ENCODE measurements at regions of chr1 and their contacts with region 1.

Region 1: GRCh38 chr1:25204797-25205480 is 27.4 kb downstream of the SYF2 start:
- DNase-seq: no peak
- H3K4me3 Mint-ChIP-seq: no peak overlapping the region
- H3K27ac Mint-ChIP-seq: no peak overlapping the region
- H3K4me1 Mint-ChIP-seq: no peaks in the 10 kb centered on the region
- H3K27me3 Mint-ChIP-seq: peaks cover 24% of the 10 kb centered on the region

Region 2: DNA sequence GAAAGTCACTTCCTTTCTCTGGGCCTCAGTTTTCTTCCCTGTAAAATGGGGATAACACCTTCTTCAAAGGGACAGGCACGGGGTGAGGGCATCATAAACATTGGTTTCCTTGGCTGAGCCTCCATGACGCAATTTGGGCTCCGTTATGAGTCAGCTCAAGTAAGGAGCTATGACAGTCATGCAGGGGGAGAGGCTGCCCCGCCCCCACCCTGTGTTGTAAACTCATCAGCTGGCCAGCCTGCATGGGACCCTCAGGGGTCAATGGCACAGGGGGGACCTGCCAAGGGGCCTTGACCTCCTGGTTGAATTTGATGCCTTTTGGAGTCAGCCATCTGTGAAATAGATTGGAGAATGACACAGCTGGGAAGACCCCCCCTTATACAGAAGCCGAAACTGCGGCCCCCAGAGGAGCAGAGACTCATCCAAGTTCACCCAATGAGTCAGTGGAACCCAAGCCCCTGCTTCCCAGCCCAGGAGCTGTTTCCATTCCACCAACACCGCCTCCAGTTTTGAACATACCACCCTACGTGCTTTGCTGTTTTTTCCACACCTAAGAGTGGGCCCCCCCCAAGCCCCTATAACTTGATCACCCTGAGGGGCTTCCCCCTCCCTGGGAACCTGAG is 238.1 kb before region 1 on chr1:
- intact Hi-C with region 1: no loop called
- DNase-seq: peak; percentile 77
- H3K4me3 Mint-ChIP-seq: peak overlapping the region; percentile 34
- H3K27ac Mint-ChIP-seq: peak overlapping the region; percentile 99
- H3K4me1 Mint-ChIP-seq: peaks cover 67% of the 10 kb centered on the region
- H3K27me3 Mint-ChIP-seq: no peaks in the 10 kb centered on the region

Region 3: GRCh38 chr1:25111706-25112105 is 93.2 kb before region 1 on chr1:
- intact Hi-C with region 1: loop called (anchors 5 kb)
- DNase-seq: no peak
- H3K4me3 Mint-ChIP-seq: no peak overlapping the region
- H3K27ac Mint-ChIP-seq: no peak overlapping the region
- H3K4me1 Mint-ChIP-seq: peaks cover 5% of the 10 kb centered on the region
- H3K27me3 Mint-ChIP-seq: peaks cover 24% of the 10 kb centered on the region

Region 4: DNA sequence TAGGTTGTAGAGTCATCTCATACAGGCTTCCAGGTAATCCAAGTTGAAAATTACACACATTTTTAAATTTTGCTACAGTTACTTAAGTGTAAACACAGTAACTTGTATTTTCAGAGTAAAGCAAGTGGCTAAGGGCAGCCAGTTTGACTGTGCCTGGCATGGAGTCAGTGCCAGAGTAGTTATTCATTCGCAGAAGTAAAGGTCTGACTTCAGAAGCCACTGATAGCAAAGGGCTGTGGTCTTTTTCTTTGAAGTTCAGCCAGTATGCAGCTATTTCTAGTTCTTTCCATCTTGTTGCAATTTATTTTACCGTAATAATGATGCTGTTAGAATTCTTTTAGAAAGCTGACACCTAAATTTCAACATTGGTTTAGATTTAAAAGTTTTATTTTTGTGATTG is 142.6 kb after region 1 on chr1:
- intact Hi-C with region 1: no loop called
- DNase-seq: no peak
- H3K4me3 Mint-ChIP-seq: no peak overlapping the region
- H3K27ac Mint-ChIP-seq: peak overlapping the region; percentile 28
- H3K4me1 Mint-ChIP-seq: peaks cover 13% of the 10 kb centered on the region
- H3K27me3 Mint-ChIP-seq: no peaks in the 10 kb centered on the region

Region 5: DNA sequence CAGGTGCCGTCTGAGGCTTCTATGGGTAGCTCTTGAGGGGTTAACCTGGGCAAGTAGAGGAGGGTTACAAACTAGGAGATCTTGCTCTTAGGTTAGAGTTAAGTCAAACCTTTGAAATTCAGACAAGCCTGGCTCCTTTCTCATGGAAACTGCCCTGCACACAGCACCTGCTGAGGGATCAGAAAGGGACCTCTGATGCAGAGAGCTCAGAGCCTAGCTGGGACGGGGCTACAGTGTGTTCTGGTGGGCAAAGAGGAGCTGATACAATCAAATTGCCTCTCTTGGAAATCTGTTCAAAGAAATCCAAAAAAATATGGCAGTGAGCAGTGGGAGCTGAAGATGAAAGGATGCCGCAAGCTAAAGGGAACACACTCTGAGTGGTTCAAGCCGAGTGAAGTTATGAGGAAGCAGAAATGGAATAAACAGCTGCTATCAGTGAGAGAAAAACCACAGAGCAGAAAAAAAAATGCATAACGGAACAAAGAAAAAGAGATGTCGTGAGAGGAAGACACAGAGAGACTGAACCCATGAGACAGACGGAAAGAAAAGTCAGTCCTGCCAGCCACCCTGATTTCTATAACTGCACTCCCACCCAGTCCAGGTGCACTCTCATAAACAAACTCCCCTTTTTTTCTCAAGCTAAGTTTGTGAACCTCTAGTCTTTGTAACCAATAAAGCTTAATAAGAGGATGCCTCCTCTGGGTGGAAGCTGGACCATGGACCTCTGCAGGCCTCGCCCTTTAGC is 766.3 kb after region 1 on chr1:
- intact Hi-C with region 1: no loop called
- DNase-seq: peak; percentile 13
- H3K4me3 Mint-ChIP-seq: peak overlapping the region; percentile 13
- H3K27ac Mint-ChIP-seq: peak overlapping the region; percentile 84
- H3K4me1 Mint-ChIP-seq: peaks cover 24% of the 10 kb centered on the region
- H3K27me3 Mint-ChIP-seq: no peaks in the 10 kb centered on the region

Measured in activated T-helper 2 cell treated with anti-CD3 and anti-CD28 coated beads, Interferon-gamma antibody, Interleukin-2, Interleukin-4, amounts not matched to agents 10 μg/mL and 5 μg/mL and 100 μg/mL, durations not matched to agents 14 hours and 24 hours and 36 hours (primary cell).